Pancreas (tissue), 10 donors: ENCODE measurements at regions of chr11 and their contacts with region 1.

Region 1: DNA sequence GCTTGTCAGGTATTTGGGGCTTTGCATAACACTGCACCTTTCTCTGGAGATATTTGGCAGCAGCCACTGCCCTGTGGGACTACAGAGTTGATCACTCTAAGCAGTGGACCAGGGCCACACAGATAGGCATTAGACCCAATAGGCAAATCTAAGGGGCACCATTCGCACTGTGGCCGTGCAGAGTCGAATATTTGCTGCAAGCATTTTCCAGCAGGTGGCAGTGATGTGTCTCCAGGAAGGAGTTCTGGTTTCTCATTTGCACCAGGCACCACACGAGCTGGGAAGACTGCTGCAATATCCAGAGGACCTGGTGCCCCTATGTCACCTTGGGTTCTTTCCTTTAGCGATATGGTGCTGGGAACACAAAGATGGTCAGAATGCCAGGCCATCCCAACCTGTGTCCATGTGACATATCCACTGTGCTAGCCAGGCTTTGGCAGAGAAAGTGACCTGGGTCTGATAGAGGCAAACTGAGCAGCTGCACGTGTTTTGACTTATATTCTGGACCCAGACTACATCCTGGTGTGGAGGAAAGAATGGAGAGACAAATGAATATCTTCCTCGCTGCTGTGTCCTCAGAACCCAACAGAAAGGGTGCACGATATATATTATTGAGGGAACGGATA is 318.7 kb downstream of the BUD13 start:
- DNase-seq: peak in 3 of 6 donors; percentile 5 to 49 (median 18)
- ATAC-seq: peak in 3 of 4 donors; percentile 44 to 72 (median 66)
- H3K4me3 ChIP-seq: no peak overlapping the region
- H3K27ac ChIP-seq: no peak overlapping the region
- H3K4me1 ChIP-seq: no peaks in the 10 kb centered on the region
- H3K27me3 ChIP-seq: no peaks in the 10 kb centered on the region
- CTCF ChIP-seq: peak in 2 of 4 donors; percentile 35 to 36

Region 2: DNA sequence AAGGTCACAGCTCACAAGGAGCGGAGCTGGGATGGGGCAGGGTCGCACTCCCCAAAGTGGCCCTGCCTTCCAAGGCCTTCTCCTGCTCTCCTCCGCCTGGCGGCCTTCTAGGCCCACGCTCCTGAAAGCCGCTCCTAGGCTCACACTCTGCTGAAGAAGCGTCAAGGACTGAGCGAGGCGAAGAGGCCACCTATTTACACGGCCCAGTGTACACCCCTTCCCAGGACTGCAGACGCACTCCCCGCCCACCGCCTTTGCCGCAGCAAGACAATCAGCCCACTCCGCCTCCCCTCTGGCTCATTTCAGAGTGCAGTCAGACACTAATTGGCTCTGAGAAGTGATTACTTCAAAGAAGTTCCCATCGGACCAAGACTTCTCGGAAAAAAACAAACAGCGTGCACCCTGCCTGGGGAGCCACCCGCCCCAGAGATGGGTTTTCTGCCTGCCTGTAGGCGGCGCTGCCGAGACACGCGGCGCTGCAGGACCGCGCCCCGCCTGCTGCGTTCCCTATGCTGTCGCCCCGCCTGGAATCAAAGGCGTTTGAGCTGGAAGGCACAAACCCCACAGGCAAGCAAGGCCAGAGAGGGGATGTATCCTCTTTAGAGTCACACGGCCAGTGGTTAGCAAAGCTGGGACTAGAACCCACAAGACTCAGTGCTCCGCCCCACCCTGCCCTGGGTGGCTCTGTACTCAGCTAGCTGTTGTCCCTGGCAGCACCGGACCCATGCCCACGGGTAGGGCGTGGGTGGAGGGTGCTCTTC is 96.2 kb before region 1 on chr11:
- intact Hi-C with region 1: no loop called
- DNase-seq: peak in 1 of 6 donors; percentile 47
- ATAC-seq: no peak
- H3K4me3 ChIP-seq: no peak overlapping the region
- H3K27ac ChIP-seq: no peak overlapping the region
- H3K4me1 ChIP-seq: peaks cover 0 to 6% (median 0%) of the 10 kb centered on the region in 3 donors
- H3K27me3 ChIP-seq: no peaks in the 10 kb centered on the region
- CTCF ChIP-seq: no peak

Region 3: DNA sequence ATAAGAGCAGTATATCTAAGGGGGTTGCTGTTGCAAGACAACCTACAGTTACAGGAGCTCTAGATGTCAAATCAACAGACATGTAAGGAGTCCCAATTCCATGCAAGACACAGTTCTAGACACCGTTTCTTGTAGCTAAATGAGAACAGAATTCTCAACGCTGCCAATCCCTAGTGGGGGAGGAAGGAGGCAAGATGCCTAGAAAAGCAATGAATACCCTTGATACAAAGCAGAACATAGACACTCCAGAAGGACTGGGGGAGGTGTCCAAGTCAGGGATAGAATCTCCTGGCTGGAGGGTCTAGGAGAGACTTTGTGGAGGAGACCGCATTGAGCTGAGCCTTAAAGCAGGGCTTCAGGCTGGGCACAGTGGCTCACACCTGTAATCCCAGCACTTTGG is 38.5 kb after region 1 on chr11:
- intact Hi-C with region 1: no loop called
- DNase-seq: no peak
- ATAC-seq: no peak
- H3K4me3 ChIP-seq: no peak overlapping the region
- H3K27ac ChIP-seq: no peak overlapping the region
- H3K4me1 ChIP-seq: no peaks in the 10 kb centered on the region
- H3K27me3 ChIP-seq: peaks cover 0 to 5% (median 0%) of the 10 kb centered on the region in 4 donors
- CTCF ChIP-seq: no peak

Region 4: DNA sequence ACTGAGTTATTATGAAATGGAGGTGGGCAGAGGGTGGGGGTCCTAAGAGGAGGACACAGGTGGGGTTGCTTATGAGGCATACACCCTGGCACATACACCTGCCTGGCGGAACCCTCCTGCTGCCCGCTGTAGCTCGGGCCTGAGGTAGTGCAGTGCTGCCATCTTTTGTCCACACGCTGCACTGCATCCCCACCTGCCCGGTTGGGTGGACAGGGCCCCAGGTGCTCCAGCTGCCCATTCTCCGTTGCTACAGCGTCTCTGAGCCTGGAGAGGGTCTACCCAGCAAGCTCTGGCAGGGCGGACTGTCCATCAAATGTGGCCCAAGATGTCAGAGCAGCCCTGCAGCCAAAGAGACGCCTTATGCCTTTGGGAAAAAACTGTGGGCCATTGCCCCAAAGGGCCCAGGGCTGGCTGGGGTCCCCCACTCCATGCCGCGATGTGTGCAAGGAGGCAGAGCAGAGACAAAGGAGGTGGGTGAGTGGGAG is 187.5 kb after region 1 on chr11:
- intact Hi-C with region 1: loop called in 1 of 3 experiments (anchors 10 kb)
- DNase-seq: peak; percentile 19 to 82 (median 68)
- ATAC-seq: peak; percentile 58 to 90 (median 88)
- H3K4me3 ChIP-seq: no peak overlapping the region
- H3K27ac ChIP-seq: no peak overlapping the region
- H3K4me1 ChIP-seq: no peaks in the 10 kb centered on the region
- H3K27me3 ChIP-seq: no peaks in the 10 kb centered on the region
- CTCF ChIP-seq: peak; percentile 24 to 74 (median 60)